CD4-positive, alpha-beta memory T cell (primary cell): ENCODE measurements at regions of chr22 and their contacts with region 1.

Region 1: GRCh38 chr22:30289134-30289979 is at the start of gene CASTOR1:
- DNase-seq: peak; percentile 82 to 89 (median 83)
- H3K4me3 ChIP-seq: peak within 1 kb of the TSS; percentile 47 to 66
- H3K4me3 Mint-ChIP-seq: peak within 1 kb of the TSS; percentile 88 to 94 (median 92)
- H3K27ac ChIP-seq: peak within 1 kb of the TSS; percentile 68
- H3K27ac Mint-ChIP-seq: peak within 1 kb of the TSS; percentile 91 to 96 (median 94)
- H3K4me1 ChIP-seq: peaks cover 41% of the 10 kb centered on the region
- H3K4me1 Mint-ChIP-seq: peaks cover 22 to 52% (median 30%) of the 10 kb centered on the region in 4 donors
- H3K27me3 ChIP-seq: no peaks in the 10 kb centered on the region
- H3K27me3 Mint-ChIP-seq: no peaks in the 10 kb centered on the region
- total RNA-seq, gene CASTOR1: 13.7 to 14.9 TPM

Region 2: DNA sequence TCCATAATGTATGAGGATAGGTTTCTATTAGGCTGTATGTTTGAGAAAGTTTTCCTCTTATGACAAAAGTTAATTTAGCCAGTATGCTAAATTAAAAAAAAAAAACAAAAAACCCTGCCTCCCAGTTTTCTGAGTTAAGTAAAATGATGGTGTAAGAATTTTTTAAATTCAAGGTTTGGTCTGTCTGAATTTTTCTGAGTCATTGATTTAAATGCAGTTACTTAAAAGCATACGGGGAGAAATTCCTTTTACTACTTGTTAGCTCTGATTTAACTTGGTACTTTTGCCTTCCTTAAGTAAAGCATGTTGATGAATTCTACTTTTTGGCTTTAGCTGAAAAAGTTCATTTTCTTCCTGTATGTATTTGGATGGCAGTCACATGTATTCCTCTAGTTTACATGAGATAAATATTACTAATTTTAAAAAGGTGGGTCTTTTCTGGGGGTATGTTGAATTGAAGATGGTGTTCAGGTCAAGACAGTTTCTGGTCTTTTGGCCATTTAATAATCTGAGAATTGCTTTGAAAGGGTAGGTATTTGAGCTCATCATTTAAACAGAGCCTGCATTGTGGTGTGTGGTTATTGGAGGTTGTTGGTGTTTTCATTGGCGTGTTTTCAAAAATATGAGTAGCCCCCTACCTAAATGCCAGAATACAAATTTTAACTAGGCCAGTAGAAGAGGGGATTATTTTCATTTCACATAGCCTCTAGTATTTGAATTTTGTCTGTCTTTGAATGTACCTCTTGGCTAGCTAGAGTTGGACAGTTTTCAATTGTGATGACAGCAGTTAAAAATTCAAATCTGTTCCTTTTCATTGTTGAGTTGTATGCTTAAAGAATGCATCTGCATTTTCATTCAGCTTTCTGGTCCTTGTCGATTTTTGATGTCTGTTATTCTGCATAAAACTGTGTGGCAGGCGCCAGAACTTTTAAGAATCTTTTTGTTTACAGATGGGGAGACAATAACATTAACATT is 341.7 kb before region 1 on chr22:
- CTCF ChIA-PET with region 1: no interaction called
- POLR2A ChIA-PET with region 1: no interaction called
- intact Hi-C with region 1: no loop called
- DNase-seq: no peak
- H3K4me3 ChIP-seq: no peak overlapping the region
- H3K4me3 Mint-ChIP-seq: peak overlapping the region in 1 of 8 donors; percentile 39
- H3K27ac ChIP-seq: no peak overlapping the region
- H3K27ac Mint-ChIP-seq: peak overlapping the region in 3 of 7 donors; percentile 32 to 43 (median 38)
- H3K4me1 ChIP-seq: peaks cover 41% of the 10 kb centered on the region
- H3K4me1 Mint-ChIP-seq: peaks cover 33 to 79% (median 53%) of the 10 kb centered on the region in 4 donors
- H3K27me3 ChIP-seq: no peaks in the 10 kb centered on the region
- H3K27me3 Mint-ChIP-seq: no peaks in the 10 kb centered on the region

Region 3: DNA sequence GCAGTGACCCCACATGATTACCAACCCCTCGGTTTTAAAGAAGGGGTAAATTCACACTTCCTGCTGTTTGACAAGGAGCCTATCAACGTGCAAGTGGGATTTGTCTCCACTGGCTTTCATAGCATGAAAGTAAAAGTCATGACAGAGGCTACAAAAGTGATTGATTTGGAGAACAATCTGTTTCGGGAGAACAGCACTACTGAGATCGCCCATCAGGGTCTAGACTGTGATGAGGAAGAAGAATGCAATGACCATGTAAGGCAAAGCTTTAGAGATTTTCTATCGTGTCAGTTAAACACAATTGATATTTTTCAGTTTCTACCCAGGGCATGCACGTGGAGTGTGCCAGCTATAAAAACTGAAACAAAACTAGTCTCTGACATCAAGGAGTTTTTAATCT is 167.4 kb before region 1 on chr22:
- CTCF ChIA-PET with region 1: interaction called, 10 read pairs
- POLR2A ChIA-PET with region 1: no interaction called
- intact Hi-C with region 1: no loop called
- DNase-seq: no peak
- H3K4me3 ChIP-seq: no peak overlapping the region
- H3K4me3 Mint-ChIP-seq: peak overlapping the region in 2 of 8 donors; percentile 4 to 60
- H3K27ac ChIP-seq: no peak overlapping the region
- H3K27ac Mint-ChIP-seq: peak overlapping the region in 1 of 7 donors; percentile 3
- H3K4me1 ChIP-seq: no peaks in the 10 kb centered on the region
- H3K4me1 Mint-ChIP-seq: peaks cover 4 to 11% (median 7%) of the 10 kb centered on the region in 4 donors
- H3K27me3 ChIP-seq: no peaks in the 10 kb centered on the region
- H3K27me3 Mint-ChIP-seq: peaks cover 0 to 1% of the 10 kb centered on the region in 2 donors

Region 4: DNA sequence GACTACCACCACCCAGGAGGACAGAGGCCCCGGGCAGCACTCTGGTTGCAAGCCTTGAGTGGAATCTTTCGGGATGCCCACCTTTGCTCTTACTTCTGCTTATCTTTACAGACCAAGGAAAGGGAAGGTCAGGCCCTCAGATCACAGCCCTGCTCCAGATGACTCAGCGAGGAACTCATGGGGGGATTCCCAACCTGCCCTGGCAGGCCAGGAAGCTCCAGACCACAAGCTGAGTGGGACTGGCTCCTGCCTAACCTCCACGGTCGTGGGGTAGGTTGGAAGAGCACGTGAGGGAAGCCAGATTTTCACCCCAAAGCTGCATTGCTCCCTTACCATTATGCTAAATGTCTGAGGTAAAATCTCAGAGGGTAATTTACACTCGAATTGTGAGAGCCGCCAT is 25.6 kb after region 1 on chr22:
- CTCF ChIA-PET with region 1: interaction called, 218 read pairs
- POLR2A ChIA-PET with region 1: interaction called, 333 read pairs
- intact Hi-C with region 1: no loop called
- DNase-seq: peak in 2 of 5 donors; percentile 38 to 83
- H3K4me3 ChIP-seq: no peak overlapping the region
- H3K4me3 Mint-ChIP-seq: peak overlapping the region in 7 of 8 donors; percentile 39 to 79 (median 52)
- H3K27ac ChIP-seq: peak overlapping the region; percentile 44
- H3K27ac Mint-ChIP-seq: peak overlapping the region; percentile 82 to 95 (median 89)
- H3K4me1 ChIP-seq: peaks cover 99% of the 10 kb centered on the region
- H3K4me1 Mint-ChIP-seq: peaks cover 86 to 100% (median 93%) of the 10 kb centered on the region in 4 donors
- H3K27me3 ChIP-seq: no peaks in the 10 kb centered on the region
- H3K27me3 Mint-ChIP-seq: no peaks in the 10 kb centered on the region

Region 5: DNA sequence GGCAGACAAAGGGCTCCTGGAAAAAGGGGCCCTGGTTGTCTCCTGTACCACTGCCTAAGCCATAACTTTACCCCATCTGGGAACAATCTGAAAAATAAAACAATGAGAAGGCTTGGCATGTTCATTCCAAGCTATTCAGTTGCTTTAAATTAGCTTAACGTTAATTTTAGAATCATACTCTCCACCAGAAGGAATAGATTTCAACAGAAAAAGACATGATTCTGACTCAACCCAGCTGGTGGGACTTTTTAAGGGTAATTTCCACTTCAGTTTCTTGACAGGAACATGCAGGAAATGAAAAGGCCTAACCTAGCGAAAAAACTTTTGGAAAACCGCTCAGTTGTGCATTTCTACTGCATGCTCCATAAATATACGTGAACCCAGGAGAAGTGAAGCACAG is 59.5 kb after region 1 on chr22:
- CTCF ChIA-PET with region 1: interaction called, 21 read pairs
- POLR2A ChIA-PET with region 1: interaction called, 118 read pairs
- intact Hi-C with region 1: no loop called
- DNase-seq: no peak
- H3K4me3 ChIP-seq: no peak overlapping the region
- H3K4me3 Mint-ChIP-seq: peak overlapping the region in 4 of 8 donors; percentile 7 to 65 (median 47)
- H3K27ac ChIP-seq: no peak overlapping the region
- H3K27ac Mint-ChIP-seq: peak overlapping the region in 6 of 7 donors; percentile 22 to 92 (median 64)
- H3K4me1 ChIP-seq: peaks cover 82% of the 10 kb centered on the region
- H3K4me1 Mint-ChIP-seq: peaks cover 36 to 88% (median 59%) of the 10 kb centered on the region in 4 donors
- H3K27me3 ChIP-seq: no peaks in the 10 kb centered on the region
- H3K27me3 Mint-ChIP-seq: no peaks in the 10 kb centered on the region

Region 6: GRCh38 chr22:30396871-30397655 is 107.7 kb after region 1 on chr22 and contains the start of gene SEC14L2:
- CTCF ChIA-PET with region 1: interaction called, 392 read pairs
- POLR2A ChIA-PET with region 1: interaction called, 46 read pairs
- intact Hi-C with region 1: no loop called
- DNase-seq: peak; percentile 42 to 60 (median 48)
- H3K4me3 ChIP-seq: peak within 1 kb of the TSS; percentile 18 to 29
- H3K4me3 Mint-ChIP-seq: peak within 1 kb of the TSS; percentile 83 to 95 (median 90)
- H3K27ac ChIP-seq: peak within 1 kb of the TSS; percentile 39
- H3K27ac Mint-ChIP-seq: peak within 1 kb of the TSS in 6 of 7 donors; percentile 57 to 93 (median 88)
- H3K4me1 ChIP-seq: peaks cover 27% of the 10 kb centered on the region
- H3K4me1 Mint-ChIP-seq: peaks cover 16 to 34% (median 27%) of the 10 kb centered on the region in 4 donors
- H3K27me3 ChIP-seq: no peaks in the 10 kb centered on the region
- H3K27me3 Mint-ChIP-seq: peaks cover 0 to 2% of the 10 kb centered on the region in 2 donors
- total RNA-seq, gene SEC14L2: 6.0 to 8.6 TPM